Prostate gland (tissue), 2 donors: ENCODE measurements at regions of chr5 and their contacts with region 1.

Region 1: GRCh38 chr5:170280011-170280493 is 17.5 kb downstream of the LCP2 start:
- DNase-seq: peak; percentile 35
- H3K4me3 ChIP-seq: no peak overlapping the region
- H3K27ac ChIP-seq: peak overlapping the region; percentile 64 to 68
- H3K4me1 ChIP-seq: no peaks in the 10 kb centered on the region
- H3K27me3 ChIP-seq: no peaks in the 10 kb centered on the region
- CTCF ChIP-seq: no peak
- POLR2A ChIP-seq: no peak

Region 2: DNA sequence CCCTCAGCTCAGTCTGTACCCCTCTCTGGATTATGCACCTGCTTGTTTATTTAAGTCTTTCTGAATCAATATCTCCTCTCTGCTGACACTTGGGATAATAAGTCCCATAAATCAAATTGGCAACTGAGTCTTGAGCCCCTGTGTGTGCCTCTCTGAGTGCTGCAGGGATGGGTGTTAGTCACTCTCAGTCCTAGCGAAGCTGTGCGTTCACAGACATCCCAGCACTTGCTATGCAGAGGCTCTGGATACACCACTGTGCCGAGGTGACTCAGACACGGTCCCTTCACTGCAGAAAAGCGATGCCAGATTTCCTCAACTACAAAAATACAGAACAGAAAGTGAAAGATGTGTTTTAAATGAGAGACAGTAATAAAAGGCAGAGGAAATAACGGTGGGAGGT is 113.2 kb after region 1 on chr5:
- intact Hi-C with region 1: loop called (anchors 5 kb)
- DNase-seq: no peak
- H3K4me3 ChIP-seq: no peak overlapping the region
- H3K27ac ChIP-seq: no peak overlapping the region
- H3K4me1 ChIP-seq: no peaks in the 10 kb centered on the region
- H3K27me3 ChIP-seq: no peaks in the 10 kb centered on the region
- CTCF ChIP-seq: no peak
- POLR2A ChIP-seq: no peak